Activated T-helper 1 cell treated with anti-CD3 and anti-CD28 coated beads, Interleukin-12 subunit alpha, Interleukin-12 subunit beta, Interleukin-2, Interleukin-4 antibody, amounts not matched to agents 30 ng/mL and 10 ng/mL and 1 ng/mL, durations not matched to agents 14 hours and 24 hours and 36 hours (primary cell): ENCODE measurements at regions of chr17 and their contacts with region 1.

Region 1: DNA sequence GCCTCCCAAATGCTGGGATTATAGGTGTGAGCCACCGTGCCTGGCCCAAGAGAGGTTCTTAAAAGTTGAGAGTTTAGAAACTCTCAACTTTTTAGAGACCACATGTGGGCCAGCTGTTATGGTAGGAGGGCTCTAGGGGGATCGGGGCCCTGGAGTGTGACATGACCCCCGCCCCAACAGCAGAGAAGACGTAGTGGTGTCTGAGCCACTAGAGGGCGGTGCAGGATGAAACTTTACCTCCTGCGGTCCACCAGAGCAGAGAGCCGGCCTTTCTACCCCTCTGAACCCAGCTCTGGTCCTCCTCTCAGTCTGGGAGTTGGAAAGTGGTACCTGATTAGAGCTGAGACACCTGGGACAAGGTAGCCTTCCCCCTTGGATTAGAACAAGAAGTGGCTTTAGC is 7.4 kb downstream of the CDK5RAP3 start:
- DNase-seq: peak; percentile 29
- H3K4me3 Mint-ChIP-seq: no peak overlapping the region
- H3K27ac Mint-ChIP-seq: no peak overlapping the region
- H3K4me1 Mint-ChIP-seq: peaks cover 19% of the 10 kb centered on the region
- H3K27me3 Mint-ChIP-seq: no peaks in the 10 kb centered on the region

Region 2: GRCh38 chr17:48011405-48012150 is 33.3 kb after region 1 on chr17:
- intact Hi-C with region 1: loop called (anchors 5 kb)
- DNase-seq: peak; percentile 44
- H3K4me3 Mint-ChIP-seq: peak overlapping the region; percentile 84
- H3K27ac Mint-ChIP-seq: peak overlapping the region; percentile 37
- H3K4me1 Mint-ChIP-seq: peaks cover 6% of the 10 kb centered on the region
- H3K27me3 Mint-ChIP-seq: peaks cover 24% of the 10 kb centered on the region

Region 3: DNA sequence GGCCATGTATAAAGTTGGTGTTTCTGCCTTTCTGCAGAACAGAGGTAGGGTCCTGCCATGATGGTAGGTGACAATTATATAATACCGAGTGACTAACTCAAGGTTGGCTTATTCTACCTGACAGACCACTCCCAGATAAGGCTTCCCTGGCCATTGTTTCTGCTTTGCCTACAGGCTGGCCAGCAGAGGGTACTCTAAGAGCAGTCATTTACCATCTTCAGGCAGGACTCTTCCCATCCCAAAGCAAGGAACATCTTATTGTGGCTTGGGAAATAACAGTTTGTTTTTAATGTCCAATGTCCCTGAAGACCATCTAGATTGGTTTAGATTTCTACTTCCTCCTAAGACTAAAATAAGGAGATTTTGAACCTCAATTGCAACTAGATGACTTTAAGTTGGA is 203.3 kb after region 1 on chr17:
- intact Hi-C with region 1: no loop called
- DNase-seq: no peak
- H3K4me3 Mint-ChIP-seq: no peak overlapping the region
- H3K27ac Mint-ChIP-seq: no peak overlapping the region
- H3K4me1 Mint-ChIP-seq: peaks cover 16% of the 10 kb centered on the region
- H3K27me3 Mint-ChIP-seq: no peaks in the 10 kb centered on the region